Activated CD4-positive, alpha-beta T cell treated with anti-CD3 and anti-CD28 coated beads for 36 hours (primary cell): ENCODE measurements at regions of chr1 and their contacts with region 1.

Region 1: DNA sequence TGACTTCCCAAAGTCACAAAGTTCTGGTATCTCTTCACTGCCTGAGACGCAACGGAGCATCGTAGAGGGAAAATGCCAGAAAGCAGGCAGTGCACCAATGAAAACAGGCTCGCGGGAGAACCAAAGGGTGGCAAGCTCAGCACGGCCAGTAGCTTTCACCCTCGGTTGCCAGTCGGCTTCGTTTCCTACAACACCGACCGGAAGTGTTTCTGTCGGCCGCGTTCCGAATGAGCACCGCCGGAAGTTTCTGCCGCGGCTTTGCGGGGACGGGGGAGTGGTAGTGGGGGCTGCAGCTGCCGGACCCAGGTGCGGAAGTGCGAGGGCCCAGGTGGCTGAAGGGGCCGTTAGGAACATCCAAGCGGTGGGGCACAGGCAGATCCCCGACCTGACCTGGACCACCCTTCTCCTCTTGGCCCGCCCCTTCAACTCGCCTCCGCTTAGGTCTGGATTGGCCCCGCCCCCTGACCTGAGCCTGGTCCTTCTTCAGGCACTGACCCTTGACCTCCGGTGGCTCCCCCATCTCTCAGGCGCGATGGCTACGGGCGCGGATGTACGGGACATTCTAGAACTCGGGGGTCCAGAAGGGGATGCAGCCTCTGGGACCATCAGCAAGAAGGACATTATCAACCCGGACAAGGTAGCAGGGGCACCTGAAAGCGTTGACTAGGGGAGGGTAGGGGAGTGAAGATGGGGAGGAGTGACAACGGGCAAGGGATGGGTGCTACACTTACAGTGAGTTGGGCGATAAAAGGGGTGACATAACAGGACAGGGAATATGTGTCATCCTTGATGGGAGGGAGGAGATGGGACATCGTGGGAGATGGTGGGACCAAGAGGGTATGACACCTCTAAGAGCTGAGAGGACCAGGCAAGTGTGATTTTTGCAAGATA is at the start of gene DMAP1:
- DNase-seq: peak; percentile 91
- ATAC-seq: peak; percentile 92
- H3K4me3 Mint-ChIP-seq: peak within 1 kb of the TSS; percentile 94
- H3K27ac Mint-ChIP-seq: peak within 1 kb of the TSS; percentile 93
- H3K4me1 Mint-ChIP-seq: peaks cover 33% of the 10 kb centered on the region
- H3K27me3 Mint-ChIP-seq: no peaks in the 10 kb centered on the region
- total RNA-seq, gene DMAP1: 30.2 to 34.8 TPM

Region 2: DNA sequence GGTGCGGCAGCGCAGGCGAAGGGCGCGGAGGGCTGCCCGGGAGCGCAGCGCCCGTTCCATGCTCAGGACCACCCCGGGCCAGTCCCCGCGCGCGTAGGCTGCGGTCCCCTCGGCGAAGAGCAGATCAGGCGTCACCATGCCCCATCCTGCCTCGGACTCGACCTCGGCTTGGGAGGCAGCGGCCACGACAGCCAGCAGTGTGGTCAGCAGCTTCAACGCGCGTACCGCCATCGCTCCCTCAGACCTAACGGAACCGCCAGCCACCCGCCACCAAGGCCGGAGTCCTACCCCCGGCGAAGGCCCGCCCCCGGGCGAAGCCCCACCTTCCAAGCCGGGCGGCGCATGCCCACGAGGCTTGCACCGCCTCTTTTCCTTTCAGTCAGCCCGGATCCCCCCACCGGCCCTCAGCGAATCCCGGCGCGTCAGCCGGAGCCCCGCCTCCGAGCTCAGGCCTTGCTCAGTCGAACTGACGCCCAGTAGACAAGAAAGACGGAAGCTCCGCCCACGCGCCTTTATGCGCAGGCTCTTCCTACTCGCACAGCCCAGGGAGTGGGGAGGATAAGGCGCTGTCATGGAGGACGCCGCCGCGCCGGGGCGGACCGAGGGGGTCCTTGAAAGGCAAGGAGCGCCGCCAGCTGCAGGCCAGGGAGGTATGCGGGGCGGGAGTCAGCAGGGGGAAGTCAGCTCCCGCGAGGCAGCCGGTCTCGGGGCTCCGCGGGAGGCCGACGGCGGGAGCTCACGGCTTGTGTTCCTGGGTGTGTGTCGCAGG is 1446.5 kb before region 1 on chr1 and contains the starts of genes C1orf50 and P3H1:
- CTCF ChIA-PET with region 1: no interaction called
- POLR2A ChIA-PET with region 1: no interaction called
- intact Hi-C with region 1: loop called in 1 of 2 experiments (anchors 2 kb)
- DNase-seq: peak; percentile 100
- ATAC-seq: peak; percentile 96
- H3K4me3 Mint-ChIP-seq: no peak within 1 kb of the TSS
- H3K27ac Mint-ChIP-seq: peak within 1 kb of the TSS; percentile 85
- H3K4me1 Mint-ChIP-seq: peaks cover 36% of the 10 kb centered on the region
- H3K27me3 Mint-ChIP-seq: no peaks in the 10 kb centered on the region
- total RNA-seq, gene C1orf50: 4.0 to 8.0 TPM
- total RNA-seq, gene P3H1: 24.3 to 28.8 TPM

Region 3: DNA sequence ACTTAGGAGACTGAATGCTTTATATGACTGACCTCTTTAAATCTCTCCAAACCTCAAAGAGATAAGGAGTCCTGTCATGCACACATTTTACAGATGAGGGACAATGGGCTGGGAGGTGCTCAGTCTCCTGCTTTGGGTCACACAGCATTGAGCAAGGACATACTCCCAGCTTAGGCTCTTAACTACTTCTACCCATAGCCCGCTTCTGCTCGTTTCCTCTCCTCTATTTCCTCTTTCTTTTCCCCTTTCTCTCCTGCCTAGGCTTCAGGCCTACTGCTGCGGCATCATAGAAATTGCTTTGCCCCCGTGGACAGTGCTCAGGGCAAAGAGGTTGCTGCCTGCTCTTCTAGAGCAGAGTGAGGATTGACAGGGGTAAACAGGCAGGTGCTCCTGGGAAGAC is 1379.5 kb before region 1 on chr1:
- CTCF ChIA-PET with region 1: no interaction called
- POLR2A ChIA-PET with region 1: no interaction called
- intact Hi-C with region 1: no loop called
- DNase-seq: no peak
- ATAC-seq: no peak
- H3K4me3 Mint-ChIP-seq: no peak overlapping the region
- H3K27ac Mint-ChIP-seq: no peak overlapping the region
- H3K4me1 Mint-ChIP-seq: no peaks in the 10 kb centered on the region
- H3K27me3 Mint-ChIP-seq: no peaks in the 10 kb centered on the region

Region 4: DNA sequence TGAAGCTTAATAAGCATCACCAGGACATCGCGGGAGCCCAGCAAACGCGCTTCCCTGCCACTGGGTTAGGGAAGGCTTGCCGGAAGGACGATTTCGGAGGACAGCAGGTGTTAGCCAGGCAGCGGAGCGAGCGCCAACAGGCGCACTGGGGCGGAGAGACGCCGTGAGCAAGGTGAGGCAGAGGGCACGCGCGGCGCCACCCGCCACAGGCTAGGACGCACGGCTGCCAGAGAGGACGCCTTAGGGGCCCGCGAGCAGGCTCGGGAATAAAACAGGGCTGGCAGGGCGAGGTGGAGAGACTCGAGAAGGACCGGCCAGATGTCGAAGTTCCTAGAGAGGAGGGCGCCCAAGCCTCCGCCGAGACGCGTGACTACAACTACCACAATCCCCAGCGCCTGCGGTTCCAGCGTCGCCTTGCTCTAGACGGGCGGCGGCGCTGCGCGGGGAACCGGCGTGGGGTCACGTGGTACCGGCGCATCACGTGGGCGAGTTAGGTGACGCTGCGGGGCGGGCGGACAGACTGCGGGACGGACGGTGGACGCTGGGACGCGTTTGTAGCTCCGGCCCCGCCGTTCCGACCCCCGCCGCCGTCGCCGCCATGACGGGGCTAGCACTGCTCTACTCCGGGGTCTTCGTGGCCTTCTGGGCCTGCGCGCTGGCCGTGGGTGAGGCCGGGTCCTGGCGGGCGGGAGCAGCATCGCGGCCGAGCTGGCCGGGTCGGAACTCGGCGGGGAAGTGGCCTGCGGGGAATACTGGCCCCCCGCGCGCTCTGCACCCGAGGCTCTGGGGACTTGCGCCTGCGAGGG is 238.8 kb before region 1 on chr1 and contains the start of gene ATP6V0B:
- CTCF ChIA-PET with region 1: no interaction called
- POLR2A ChIA-PET with region 1: no interaction called
- intact Hi-C with region 1: loop called in 1 of 2 experiments (anchors 5 kb)
- DNase-seq: peak; percentile 99
- ATAC-seq: peak; percentile 76
- H3K4me3 Mint-ChIP-seq: peak within 1 kb of the TSS; percentile 81
- H3K27ac Mint-ChIP-seq: peak within 1 kb of the TSS; percentile 88
- H3K4me1 Mint-ChIP-seq: peaks cover 48% of the 10 kb centered on the region
- H3K27me3 Mint-ChIP-seq: no peaks in the 10 kb centered on the region
- total RNA-seq, gene ATP6V0B: 39.4 to 75.6 TPM

Region 5: DNA sequence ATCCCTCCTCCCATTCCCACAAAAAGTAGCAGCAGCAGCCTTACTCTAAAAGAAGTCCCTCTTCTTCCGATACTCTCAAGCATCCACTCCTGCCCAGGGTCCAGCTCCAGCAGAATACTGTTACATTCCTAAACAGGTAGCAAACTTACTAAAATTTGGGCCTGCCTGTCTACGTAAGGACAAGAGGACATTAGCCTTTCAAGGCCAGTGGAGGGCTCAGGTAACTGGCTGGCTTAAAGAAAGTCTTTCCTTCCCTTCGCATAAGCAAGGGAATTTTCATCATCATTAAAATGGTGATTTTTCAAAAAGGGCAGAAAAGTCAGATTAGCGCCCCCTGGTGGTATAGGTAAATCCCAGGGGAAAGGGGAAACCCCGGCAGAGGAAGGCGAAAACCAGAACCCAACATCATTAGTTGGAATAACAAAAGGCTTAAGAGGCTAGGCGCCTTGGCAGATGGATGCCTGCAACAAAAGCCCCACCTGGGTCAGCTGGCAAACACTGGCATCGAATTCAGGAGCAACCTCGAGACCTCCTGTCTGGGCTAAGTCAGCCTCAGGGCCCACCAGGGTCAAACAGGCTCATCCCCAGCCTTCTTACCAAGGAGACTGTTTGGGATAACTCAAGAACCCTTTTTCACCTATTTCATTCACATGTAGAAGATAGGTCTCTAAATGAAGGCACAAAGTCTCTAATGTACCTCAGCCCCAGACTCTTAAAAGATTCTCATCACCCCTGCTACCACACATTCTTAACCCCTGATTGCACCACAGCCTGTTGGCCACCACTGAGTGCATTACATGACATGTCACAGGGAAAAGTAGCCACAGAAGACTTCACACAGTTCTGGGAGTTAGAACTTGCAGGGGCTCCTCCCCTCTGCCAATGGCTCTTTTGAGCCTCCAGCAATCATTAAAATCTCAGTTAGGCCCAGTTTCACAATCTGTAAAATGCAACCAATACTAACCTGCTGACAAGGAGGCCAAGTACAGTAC is 104.9 kb after region 1 on chr1:
- CTCF ChIA-PET with region 1: interaction called, 46 read pairs
- POLR2A ChIA-PET with region 1: no interaction called
- intact Hi-C with region 1: loop called (anchors 1 to 2 kb)
- DNase-seq: peak; percentile 66
- ATAC-seq: peak; percentile 42
- H3K4me3 Mint-ChIP-seq: no peak overlapping the region
- H3K27ac Mint-ChIP-seq: peak overlapping the region; percentile 11
- H3K4me1 Mint-ChIP-seq: peaks cover 5% of the 10 kb centered on the region
- H3K27me3 Mint-ChIP-seq: no peaks in the 10 kb centered on the region

Region 6: DNA sequence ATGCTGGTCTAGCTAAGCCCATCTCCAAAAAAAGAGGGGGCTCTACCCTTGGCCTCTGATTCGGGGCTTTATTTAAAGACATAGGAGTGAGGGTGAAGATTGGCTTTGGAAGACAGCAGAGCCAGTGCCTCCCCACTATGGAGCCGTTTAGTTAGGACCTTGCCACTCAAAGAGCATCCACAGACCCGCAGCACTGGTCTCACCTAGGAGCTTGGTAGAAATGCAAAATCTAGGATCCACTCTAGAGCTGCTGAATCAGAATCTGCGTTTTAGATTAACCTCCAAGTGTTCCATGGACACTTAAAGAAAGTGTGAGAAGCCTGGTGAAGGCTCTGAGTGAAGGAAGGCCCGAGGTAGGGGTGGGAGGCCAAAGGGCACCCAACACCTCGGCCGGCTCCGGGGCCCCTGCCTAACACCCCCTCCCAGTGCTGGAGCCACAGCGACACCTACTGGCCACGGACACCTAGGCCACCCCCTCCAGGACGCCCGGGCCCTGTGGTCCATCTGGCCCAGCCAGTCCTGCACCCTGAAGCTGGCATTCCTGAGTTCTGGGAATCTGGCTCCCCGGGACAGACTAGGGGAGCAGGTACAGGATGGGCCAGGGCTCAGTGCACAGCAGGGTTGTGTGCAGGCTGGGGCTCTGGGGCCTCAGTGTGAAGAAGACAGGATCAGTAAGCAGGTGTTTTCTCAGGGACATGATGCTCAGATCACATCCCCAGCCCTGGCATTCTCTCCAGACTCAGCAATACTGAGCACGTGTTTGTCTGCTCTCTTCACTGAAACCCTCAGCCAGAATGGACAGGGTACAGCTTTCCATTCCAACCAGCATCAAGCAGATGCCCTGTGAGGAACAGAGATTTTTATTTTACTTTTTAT is 381.6 kb after region 1 on chr1:
- CTCF ChIA-PET with region 1: interaction called, 3 read pairs
- POLR2A ChIA-PET with region 1: no interaction called
- intact Hi-C with region 1: loop called (anchors 1 to 5 kb)
- DNase-seq: peak; percentile 91
- ATAC-seq: peak; percentile 100
- H3K4me3 Mint-ChIP-seq: no peak overlapping the region
- H3K27ac Mint-ChIP-seq: no peak overlapping the region
- H3K4me1 Mint-ChIP-seq: no peaks in the 10 kb centered on the region
- H3K27me3 Mint-ChIP-seq: peaks cover 2% of the 10 kb centered on the region

Region 7: DNA sequence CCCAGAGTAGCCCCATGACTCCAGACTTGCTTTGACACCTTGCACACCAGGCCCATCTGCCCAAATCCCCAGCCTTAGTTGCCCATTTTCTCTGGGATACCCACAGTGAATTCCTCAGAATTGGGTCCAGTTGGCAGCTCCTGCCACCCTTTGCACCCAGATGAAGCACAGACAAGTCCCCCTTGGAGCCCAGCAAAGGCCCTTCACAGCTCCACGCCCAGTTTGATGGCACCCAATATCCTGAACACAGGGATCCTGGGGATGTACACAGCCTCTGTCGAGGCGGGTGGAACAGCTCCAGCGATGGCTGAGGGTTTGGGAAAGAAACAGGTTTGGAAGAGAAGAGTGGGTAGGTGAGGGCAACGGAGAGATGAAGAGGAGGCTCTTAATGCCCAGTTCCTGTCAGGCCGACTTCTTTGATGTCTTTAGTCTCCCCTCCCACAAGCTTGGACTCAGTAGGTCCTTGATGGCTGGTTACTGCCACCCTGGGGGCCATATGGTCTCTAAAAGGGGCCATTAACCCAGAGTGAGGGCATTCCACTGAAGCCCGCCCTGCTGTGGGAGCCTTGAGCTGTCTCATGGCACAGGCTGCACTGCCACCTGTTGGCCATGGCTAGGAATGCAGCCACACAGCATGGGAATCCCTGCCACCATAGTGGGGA is 439.1 kb after region 1 on chr1:
- CTCF ChIA-PET with region 1: interaction called, 6 read pairs
- POLR2A ChIA-PET with region 1: no interaction called
- intact Hi-C with region 1: loop called (anchors 1 to 10 kb)
- DNase-seq: peak; percentile 86
- ATAC-seq: peak; percentile 94
- H3K4me3 Mint-ChIP-seq: no peak overlapping the region
- H3K27ac Mint-ChIP-seq: no peak overlapping the region
- H3K4me1 Mint-ChIP-seq: no peaks in the 10 kb centered on the region
- H3K27me3 Mint-ChIP-seq: no peaks in the 10 kb centered on the region